ENCODE measurements at regions of chr17 and their contacts with region 1.

Region 1: GRCh38 chr17:81959362-81960129 is 1.4 kb downstream of the NOTUM start:
- DNase-seq: peak in 1 of 2 experiments; percentile 72
- H3K4me3 ChIP-seq: peak overlapping the region in 1 of 4 experiments; percentile 52; a peak in 2 of 8 replicates
- H3K27ac ChIP-seq: no peak overlapping the region
- H3K4me1 ChIP-seq: peaks cover 0 to 6% (median 1%) of the 10 kb centered on the region in 4 experiments; a peak in 4 of 7 replicates
- H3K27me3 ChIP-seq: peaks cover 46 to 80% (median 63%) of the 10 kb centered on the region in 4 experiments
- CTCF ChIP-seq: peak; percentile 51 to 98 (median 75)
- EP300 ChIP-seq: no peak
- POLR2A ChIP-seq: no peak
- RAD21 ChIP-seq: peak; percentile 26 to 68; a peak in 3 of 4 replicates

Region 2: DNA sequence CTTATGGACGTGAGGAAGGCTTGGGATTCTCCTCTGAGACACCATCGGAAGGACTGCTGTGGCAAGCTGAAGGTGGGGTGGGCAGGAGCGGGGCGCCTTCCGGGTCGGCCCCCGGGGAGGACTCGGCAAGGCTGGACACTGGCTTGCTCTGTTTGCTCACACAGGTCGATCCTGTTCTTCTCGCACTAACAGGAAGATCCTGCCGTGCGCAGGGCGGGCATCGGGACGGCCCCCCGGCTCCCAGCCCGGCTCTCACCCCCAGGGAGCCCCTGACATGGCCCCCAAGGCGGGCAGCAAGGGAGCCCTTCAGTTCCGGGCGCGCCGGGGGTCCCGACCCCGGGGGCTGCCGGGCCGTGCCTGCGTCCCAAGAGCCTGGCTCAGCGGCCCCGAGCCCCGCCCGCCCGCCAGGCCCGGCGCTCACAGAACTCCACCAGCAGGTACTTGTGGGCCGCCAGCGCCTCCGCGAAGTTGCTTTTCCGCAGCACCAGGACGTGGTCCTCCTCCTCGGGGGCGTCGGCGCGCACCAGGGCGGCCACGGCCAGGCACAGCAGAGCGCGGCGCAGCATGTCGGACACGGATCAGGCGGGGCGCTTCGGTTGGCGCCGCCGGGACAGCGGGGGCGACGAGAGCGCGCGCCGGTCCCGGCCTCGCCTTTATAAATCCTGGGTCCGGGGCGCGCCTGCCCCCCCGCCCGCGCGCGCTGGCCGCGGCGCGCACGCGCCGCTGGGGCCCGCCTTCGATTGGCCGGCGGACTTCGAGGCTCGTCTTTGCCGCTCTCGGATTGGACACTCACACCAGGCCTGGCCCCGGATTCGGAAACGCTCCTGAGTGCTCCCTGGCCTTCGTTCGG is 99.4 kb before region 1 on chr17 and contains the start of gene P4HB:
- CTCF ChIA-PET with region 1: no interaction called
- POLR2A ChIA-PET with region 1: no interaction called
- DNase-seq: peak in 1 of 2 experiments; percentile 93
- H3K4me3 ChIP-seq: peak within 1 kb of the TSS; percentile 79 to 95 (median 90)
- H3K27ac ChIP-seq: peak within 1 kb of the TSS; percentile 79; the same call in 1 of the 2 replicates
- H3K4me1 ChIP-seq: peaks cover 0 to 5% (median 5%) of the 10 kb centered on the region in 4 experiments; a peak in 5 of 7 replicates
- H3K27me3 ChIP-seq: no peaks in the 10 kb centered on the region
- CTCF ChIP-seq: no peak
- EP300 ChIP-seq: no peak
- POLR2A ChIP-seq: peak in 1 of 2 experiments; percentile 58; a peak in 2 of 3 replicates
- RAD21 ChIP-seq: no peak
- total RNA-seq, gene P4HB: 374 and 379 TPM in 2 replicates

Region 3: GRCh38 chr17:81879121-81879520 is 80.4 kb before region 1 on chr17:
- CTCF ChIA-PET with region 1: no interaction called
- POLR2A ChIA-PET with region 1: no interaction called
- DNase-seq: no peak
- H3K4me3 ChIP-seq: no peak overlapping the region
- H3K27ac ChIP-seq: no peak overlapping the region
- H3K4me1 ChIP-seq: no peaks in the 10 kb centered on the region
- H3K27me3 ChIP-seq: no peaks in the 10 kb centered on the region
- CTCF ChIP-seq: no peak
- EP300 ChIP-seq: no peak
- POLR2A ChIP-seq: no peak
- RAD21 ChIP-seq: no peak

Region 4: DNA sequence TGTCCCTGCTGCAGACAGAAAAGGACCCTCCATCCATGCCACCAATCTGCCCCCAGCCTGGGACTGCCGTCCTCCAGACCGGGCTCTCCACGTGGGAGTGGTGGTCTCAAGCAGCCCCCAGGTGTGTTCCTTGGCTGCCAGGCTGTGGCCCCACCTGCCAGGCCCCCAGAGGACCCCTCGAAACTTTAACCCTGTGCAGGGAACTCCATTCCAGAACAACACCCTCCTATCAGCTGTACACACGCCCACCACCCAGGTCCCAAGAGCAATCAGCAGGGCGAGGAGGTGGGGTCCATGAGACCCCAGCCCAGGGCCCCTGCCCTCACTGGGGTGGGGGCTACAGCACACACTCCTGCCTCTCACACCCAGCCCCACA is 23.8 kb before region 1 on chr17:
- CTCF ChIA-PET with region 1: interaction called, 7 read pairs
- POLR2A ChIA-PET with region 1: interaction called, 14 read pairs
- DNase-seq: no peak
- H3K4me3 ChIP-seq: peak overlapping the region in 2 of 4 experiments; percentile 12 to 91; a peak in 2 of 8 replicates
- H3K27ac ChIP-seq: no peak overlapping the region
- H3K4me1 ChIP-seq: peaks cover 0 to 4% (median 1%) of the 10 kb centered on the region in 4 experiments; a peak in 3 of 7 replicates
- H3K27me3 ChIP-seq: peaks cover 0 to 3% (median 0%) of the 10 kb centered on the region in 4 experiments; a peak in 1 of 7 replicates
- CTCF ChIP-seq: no peak
- EP300 ChIP-seq: no peak
- POLR2A ChIP-seq: no peak
- RAD21 ChIP-seq: no peak

Region 5: GRCh38 chr17:81977211-81978027 is 17.9 kb after region 1 on chr17 and contains the start of gene ASPSCR1:
- CTCF ChIA-PET with region 1: interaction called, 22 read pairs
- POLR2A ChIA-PET with region 1: interaction called, 7 read pairs
- DNase-seq: peak; percentile 57 to 93
- H3K4me3 ChIP-seq: peak within 1 kb of the TSS; percentile 62 to 88 (median 82)
- H3K27ac ChIP-seq: peak within 1 kb of the TSS; percentile 83
- H3K4me1 ChIP-seq: peaks cover 0 to 7% (median 6%) of the 10 kb centered on the region in 4 experiments; a peak in 5 of 7 replicates
- H3K27me3 ChIP-seq: peaks cover 0 to 19% (median 12%) of the 10 kb centered on the region in 4 experiments; a peak in 5 of 7 replicates
- CTCF ChIP-seq: no peak
- EP300 ChIP-seq: peak in 1 of 2 experiments; percentile 73; a peak in 1 of 3 replicates
- POLR2A ChIP-seq: peak in 1 of 2 experiments; percentile 81; a peak in 2 of 3 replicates
- RAD21 ChIP-seq: no peak
- total RNA-seq, gene ASPSCR1: 41.8 and 43.7 TPM in 2 replicates

Region 6: DNA sequence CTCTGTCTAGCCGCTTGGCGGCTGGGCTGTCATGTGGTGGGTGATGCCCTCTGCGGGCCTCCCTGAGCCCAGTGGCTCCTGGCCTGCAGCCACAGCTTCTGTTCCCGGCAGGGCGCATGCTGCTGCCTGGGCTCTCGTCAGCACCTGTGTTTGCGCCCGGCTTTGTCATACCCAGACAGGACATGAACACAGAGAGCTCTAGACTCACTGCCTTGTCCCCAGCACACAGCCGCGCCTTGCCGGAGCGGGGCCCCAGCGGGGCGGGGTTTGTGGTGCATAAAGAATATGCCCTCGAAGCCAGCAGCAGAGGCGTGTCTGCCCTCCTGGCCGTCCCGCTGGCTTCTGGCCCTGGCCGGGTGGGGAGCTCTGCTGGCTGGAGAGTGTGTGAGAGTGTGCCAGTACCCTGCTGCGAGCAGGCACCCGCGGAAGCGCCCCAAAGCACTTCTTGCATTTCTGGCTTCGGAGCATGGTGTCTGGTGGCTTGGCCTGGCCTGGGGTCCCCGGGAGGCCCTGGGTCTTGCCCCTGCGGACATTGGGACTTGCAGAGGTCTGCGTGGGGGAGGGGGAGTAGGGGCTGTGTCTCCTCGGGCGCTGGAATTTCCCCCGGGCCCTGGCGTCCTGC is 32.2 kb after region 1 on chr17:
- CTCF ChIA-PET with region 1: interaction called, 17 read pairs
- POLR2A ChIA-PET with region 1: interaction called, 3 read pairs
- DNase-seq: no peak
- H3K4me3 ChIP-seq: peak overlapping the region in 1 of 4 experiments; percentile 9; a peak in 2 of 8 replicates
- H3K27ac ChIP-seq: no peak overlapping the region
- H3K4me1 ChIP-seq: peaks cover 0 to 31% (median 27%) of the 10 kb centered on the region in 4 experiments; a peak in 6 of 7 replicates
- H3K27me3 ChIP-seq: no peaks in the 10 kb centered on the region
- CTCF ChIP-seq: no peak
- EP300 ChIP-seq: no peak
- POLR2A ChIP-seq: no peak
- RAD21 ChIP-seq: no peak

Measured in H1 (cell line).